Dorsolateral prefrontal cortex (tissue), 120 donors: ENCODE measurements at regions of chr19 and their contacts with region 1.

Region 1: DNA sequence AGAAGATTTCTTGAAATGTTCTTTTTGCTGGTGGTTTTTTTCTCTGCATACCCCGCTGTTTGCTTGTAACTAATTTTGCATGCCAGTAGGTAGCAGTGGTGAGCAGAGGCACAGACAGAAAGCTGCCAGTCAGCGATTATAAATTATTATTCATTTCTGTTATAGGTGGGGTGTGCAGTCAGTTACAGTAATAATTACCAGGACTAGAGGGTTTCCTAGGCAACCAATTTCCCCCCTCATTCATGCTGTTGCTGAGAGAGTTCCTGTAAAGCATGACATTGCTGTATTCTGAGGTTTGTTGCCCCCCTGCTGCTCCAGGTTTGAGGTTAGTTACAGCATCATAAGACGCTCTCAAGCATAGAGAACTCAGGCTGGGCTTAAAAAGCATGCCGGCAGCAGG is 104.5 kb downstream of the URI1 start:
- DNase-seq: peak in 1 of 10 donors; percentile 28
- H3K4me3 ChIP-seq: peak overlapping the region in 15 of 59 donors; percentile 3 to 54 (median 17)
- H3K27ac ChIP-seq: peak overlapping the region in 57 of 59 donors; percentile 1 to 99 (median 92)
- H3K27me3 ChIP-seq: no peaks in the 10 kb centered on the region
- CTCF ChIP-seq: peak; percentile 17 to 82 (median 66)

Region 2: GRCh38 chr19:29941828-29942403 is 104.6 kb before region 1 on chr19 and contains the start of gene URI1:
- intact Hi-C with region 1: loop called in 1 of 2 experiments (anchors 10 kb)
- DNase-seq: peak; percentile 81 to 95 (median 89)
- H3K4me3 ChIP-seq: peak within 1 kb of the TSS; percentile 61 to 97 (median 88)
- H3K27ac ChIP-seq: peak within 1 kb of the TSS in 46 of 59 donors; percentile 0 to 87 (median 58)
- H3K27me3 ChIP-seq: no peaks in the 10 kb centered on the region
- CTCF ChIP-seq: peak in 18 of 56 donors; percentile 9 to 37 (median 16)
- total RNA-seq, gene URI1: 43.6 to 90.9 (median 61.6) TPM

Region 3: DNA sequence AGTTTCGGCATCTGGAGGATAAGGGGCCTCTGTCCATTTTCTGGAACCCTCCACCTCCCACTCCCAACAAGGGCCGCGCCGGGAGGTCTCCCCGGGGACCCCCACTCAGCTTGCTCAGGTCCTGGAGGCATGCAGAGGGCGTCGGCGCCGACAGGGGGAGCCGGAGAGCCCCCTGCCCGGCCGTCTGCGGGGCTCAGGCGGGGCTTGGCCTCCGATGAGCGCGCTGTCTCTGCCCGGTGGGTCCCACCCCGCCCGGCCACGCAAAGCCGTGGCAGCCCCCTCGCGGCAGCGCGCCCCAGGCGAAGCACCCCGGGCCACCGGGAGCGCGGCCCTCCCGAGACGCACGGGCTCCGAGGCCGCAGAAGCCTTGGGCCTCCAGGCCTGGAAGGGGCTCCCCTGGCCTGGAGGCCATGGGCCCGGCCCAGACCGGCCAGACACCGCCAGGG is 175.9 kb after region 1 on chr19:
- intact Hi-C with region 1: loop called (anchors 2 kb)
- DNase-seq: no peak
- H3K4me3 ChIP-seq: peak overlapping the region in 25 of 59 donors; percentile 1 to 81 (median 26)
- H3K27ac ChIP-seq: peak overlapping the region in 43 of 59 donors; percentile 20 to 96 (median 90)
- H3K27me3 ChIP-seq: peaks cover 0 to 75% (median 45%) of the 10 kb centered on the region in 45 donors
- CTCF ChIP-seq: peak in 55 of 56 donors; percentile 25 to 83 (median 64)

Region 4: GRCh38 chr19:30235966-30236365 is 189.4 kb after region 1 on chr19:
- intact Hi-C with region 1: no loop called
- DNase-seq: peak in 9 of 10 donors; percentile 54 to 82 (median 69)
- H3K4me3 ChIP-seq: peak overlapping the region in 57 of 59 donors; percentile 1 to 60 (median 37)
- H3K27ac ChIP-seq: peak overlapping the region; percentile 0 to 94 (median 75)
- H3K27me3 ChIP-seq: peaks cover 0 to 43% (median 9%) of the 10 kb centered on the region in 45 donors
- CTCF ChIP-seq: peak in 1 of 56 donors; percentile 10

Region 5: GRCh38 chr19:30358821-30359580 is 312.5 kb after region 1 on chr19:
- intact Hi-C with region 1: loop called in 1 of 2 experiments (anchors 10 kb)
- DNase-seq: peak in 1 of 10 donors; percentile 7
- H3K4me3 ChIP-seq: no peak overlapping the region
- H3K27ac ChIP-seq: peak overlapping the region in 46 of 59 donors; percentile 41 to 96 (median 82)
- H3K27me3 ChIP-seq: peaks cover 0 to 4% (median 0%) of the 10 kb centered on the region in 45 donors
- CTCF ChIP-seq: no peak

Region 6: GRCh38 chr19:30406220-30407067 is 359.9 kb after region 1 on chr19:
- intact Hi-C with region 1: loop called in 1 of 2 experiments (anchors 10 kb)
- DNase-seq: peak in 8 of 10 donors; percentile 23 to 74 (median 67)
- H3K4me3 ChIP-seq: peak overlapping the region in 4 of 59 donors; percentile 1 to 20 (median 10)
- H3K27ac ChIP-seq: peak overlapping the region in 58 of 59 donors; percentile 19 to 95 (median 82)
- H3K27me3 ChIP-seq: peaks cover 0 to 4% (median 0%) of the 10 kb centered on the region in 45 donors
- CTCF ChIP-seq: peak in 55 of 56 donors; percentile 27 to 82 (median 62)